H1 (cell line): ENCODE measurements at regions of chr22 and their contacts with region 1.

Region 1: GRCh38 chr22:22327723-22328122 is 83.1 kb downstream of the VPREB1 start:
- DNase-seq: no peak
- H3K4me3 ChIP-seq: no peak overlapping the region
- H3K27ac ChIP-seq: no peak overlapping the region
- H3K4me1 ChIP-seq: no peaks in the 10 kb centered on the region
- H3K27me3 ChIP-seq: peaks cover 83 to 100% (median 98%) of the 10 kb centered on the region in 4 experiments
- CTCF ChIP-seq: no peak
- EP300 ChIP-seq: no peak
- POLR2A ChIP-seq: no peak
- RAD21 ChIP-seq: no peak

Region 2: DNA sequence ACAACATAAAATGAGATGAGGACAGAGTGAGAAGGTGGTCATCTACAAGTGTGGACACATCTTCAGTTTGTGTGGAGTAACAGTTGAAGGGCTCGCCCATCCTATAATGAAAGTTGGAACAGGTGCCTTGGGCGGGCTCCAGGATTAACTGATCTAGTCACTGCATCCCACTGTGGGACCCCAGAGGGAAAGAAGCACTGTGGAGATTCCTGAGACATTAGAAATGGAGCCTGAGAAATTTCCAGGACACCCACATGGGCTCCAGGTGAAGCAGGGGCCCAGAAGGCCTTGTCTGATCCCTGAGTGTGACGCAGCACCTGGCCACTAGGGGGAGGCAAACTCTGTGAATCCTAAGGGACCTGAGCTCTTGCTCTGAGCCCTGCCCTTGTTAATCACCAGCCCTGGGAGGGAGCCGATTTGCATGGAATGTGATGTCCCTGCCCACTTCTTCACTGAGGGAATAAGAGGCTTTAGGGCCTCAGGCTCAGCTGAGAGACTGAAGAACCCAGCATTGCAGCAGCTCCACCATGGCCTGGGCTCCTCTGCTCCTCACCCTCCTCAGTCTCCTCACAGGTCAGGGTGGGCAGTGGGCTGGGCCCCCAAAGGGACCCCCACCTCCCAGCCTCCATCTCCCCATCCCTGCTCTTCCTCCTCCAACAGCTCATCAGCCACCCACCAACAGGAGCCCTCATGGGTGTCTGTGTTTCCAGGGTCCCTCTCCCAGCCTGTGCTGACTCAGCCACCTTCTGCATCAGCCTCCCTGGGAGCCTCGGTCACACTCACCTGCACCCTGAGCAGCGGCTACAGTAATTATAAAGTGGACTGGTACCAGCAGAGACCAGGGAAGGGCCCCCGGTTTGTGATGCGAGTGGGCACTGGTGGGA is 15.2 kb after region 1 on chr22:
- CTCF ChIA-PET with region 1: interaction called, 16 read pairs
- POLR2A ChIA-PET with region 1: no interaction called
- DNase-seq: peak; percentile 82 to 96
- H3K4me3 ChIP-seq: no peak overlapping the region
- H3K27ac ChIP-seq: no peak overlapping the region
- H3K4me1 ChIP-seq: peaks cover 0 to 4% (median 1%) of the 10 kb centered on the region in 4 experiments; a peak in 2 of 7 replicates
- H3K27me3 ChIP-seq: peaks cover 69 to 98% (median 90%) of the 10 kb centered on the region in 4 experiments
- CTCF ChIP-seq: peak; percentile 85 to 97 (median 88)
- EP300 ChIP-seq: no peak
- POLR2A ChIP-seq: no peak
- RAD21 ChIP-seq: peak; percentile 65 to 70